ENCODE measurements at regions of chr4 and their contacts with region 1.

Region 1: DNA sequence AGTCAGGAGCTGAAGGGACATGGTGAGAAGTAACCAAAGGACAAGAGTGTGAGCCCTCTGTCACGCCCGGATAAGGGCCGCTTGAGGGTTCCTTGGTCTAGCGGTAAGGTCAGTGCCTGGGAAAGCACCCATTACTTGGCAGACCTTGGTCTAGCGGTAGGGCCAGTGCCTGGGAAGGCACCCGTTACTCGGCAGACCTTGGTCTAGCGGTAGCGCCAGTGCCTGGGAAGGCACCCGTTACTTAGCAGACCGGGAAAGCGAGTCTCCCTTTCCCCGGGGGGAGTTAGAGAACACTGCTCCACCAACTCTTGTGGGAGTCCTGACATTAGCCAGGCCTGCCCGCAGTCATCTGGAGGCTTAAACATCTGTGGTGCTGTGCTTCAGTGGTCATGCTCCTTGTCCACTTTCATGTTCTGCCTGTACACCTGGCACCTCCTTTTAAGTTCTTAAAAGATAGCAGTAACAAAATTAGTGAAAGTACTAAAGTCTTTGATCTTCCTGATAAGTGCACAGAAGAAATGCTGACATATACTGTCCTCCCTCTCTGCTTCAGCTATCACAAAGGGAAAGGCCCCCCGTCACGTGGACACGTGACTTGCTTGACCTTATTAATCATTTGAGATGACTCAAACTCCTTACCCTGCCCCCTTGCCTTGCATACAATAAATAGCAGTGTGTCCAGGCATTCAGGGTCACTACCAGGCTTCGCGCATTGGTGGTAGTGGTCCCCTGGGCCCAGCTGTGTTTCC is 9.3 kb upstream of the SEC24B start:
- DNase-seq: no peak
- H3K4me3 ChIP-seq: no peak overlapping the region
- H3K27ac ChIP-seq: no peak overlapping the region
- H3K4me1 ChIP-seq: no peaks in the 10 kb centered on the region
- H3K27me3 ChIP-seq: no peaks in the 10 kb centered on the region
- CTCF ChIP-seq: no peak

Region 2: GRCh38 chr4:109032671-109033070 is 391.6 kb before region 1 on chr4:
- intact Hi-C with region 1: no loop called
- DNase-seq: peak in 3 of 5 donors; percentile 37 to 62 (median 56)
- H3K4me3 ChIP-seq: no peak overlapping the region
- H3K27ac ChIP-seq: no peak overlapping the region
- H3K4me1 ChIP-seq: peaks cover 0 to 3% (median 0%) of the 10 kb centered on the region in 3 donors
- H3K27me3 ChIP-seq: no peaks in the 10 kb centered on the region
- CTCF ChIP-seq: no peak

Region 3: DNA sequence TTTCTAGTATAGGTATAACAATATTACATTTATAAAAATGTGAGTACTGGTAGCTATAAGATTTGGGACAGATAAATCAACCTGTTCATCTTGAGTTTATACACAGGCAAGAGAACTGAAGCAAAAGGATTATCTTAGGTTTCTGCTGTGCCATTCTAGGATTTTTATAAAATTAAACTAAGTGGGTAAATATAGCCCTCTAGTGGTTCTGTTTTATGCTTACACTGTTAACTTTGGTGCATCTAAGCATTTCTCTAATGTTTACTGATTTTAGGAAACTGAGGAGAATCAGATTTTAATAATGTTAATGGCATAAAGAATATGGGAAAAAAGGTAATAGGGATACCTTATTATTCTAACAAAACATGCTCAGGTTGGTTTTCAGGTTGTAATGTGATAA is 402.5 kb after region 1 on chr4:
- intact Hi-C with region 1: loop called (anchors 10 kb)
- DNase-seq: peak in 2 of 5 donors; percentile 7 to 31
- H3K4me3 ChIP-seq: no peak overlapping the region
- H3K27ac ChIP-seq: no peak overlapping the region
- H3K4me1 ChIP-seq: no peaks in the 10 kb centered on the region
- H3K27me3 ChIP-seq: no peaks in the 10 kb centered on the region
- CTCF ChIP-seq: peak; percentile 32

Region 4: GRCh38 chr4:109979920-109980717 is 555.9 kb after region 1 on chr4:
- intact Hi-C with region 1: no loop called
- DNase-seq: no peak
- H3K4me3 ChIP-seq: no peak overlapping the region
- H3K27ac ChIP-seq: no peak overlapping the region
- H3K4me1 ChIP-seq: no peaks in the 10 kb centered on the region
- H3K27me3 ChIP-seq: no peaks in the 10 kb centered on the region
- CTCF ChIP-seq: no peak

Measured in kidney (tissue), 22 donors.